ENCODE measurements at regions of chr13 and their contacts with region 1.

Region 1: DNA sequence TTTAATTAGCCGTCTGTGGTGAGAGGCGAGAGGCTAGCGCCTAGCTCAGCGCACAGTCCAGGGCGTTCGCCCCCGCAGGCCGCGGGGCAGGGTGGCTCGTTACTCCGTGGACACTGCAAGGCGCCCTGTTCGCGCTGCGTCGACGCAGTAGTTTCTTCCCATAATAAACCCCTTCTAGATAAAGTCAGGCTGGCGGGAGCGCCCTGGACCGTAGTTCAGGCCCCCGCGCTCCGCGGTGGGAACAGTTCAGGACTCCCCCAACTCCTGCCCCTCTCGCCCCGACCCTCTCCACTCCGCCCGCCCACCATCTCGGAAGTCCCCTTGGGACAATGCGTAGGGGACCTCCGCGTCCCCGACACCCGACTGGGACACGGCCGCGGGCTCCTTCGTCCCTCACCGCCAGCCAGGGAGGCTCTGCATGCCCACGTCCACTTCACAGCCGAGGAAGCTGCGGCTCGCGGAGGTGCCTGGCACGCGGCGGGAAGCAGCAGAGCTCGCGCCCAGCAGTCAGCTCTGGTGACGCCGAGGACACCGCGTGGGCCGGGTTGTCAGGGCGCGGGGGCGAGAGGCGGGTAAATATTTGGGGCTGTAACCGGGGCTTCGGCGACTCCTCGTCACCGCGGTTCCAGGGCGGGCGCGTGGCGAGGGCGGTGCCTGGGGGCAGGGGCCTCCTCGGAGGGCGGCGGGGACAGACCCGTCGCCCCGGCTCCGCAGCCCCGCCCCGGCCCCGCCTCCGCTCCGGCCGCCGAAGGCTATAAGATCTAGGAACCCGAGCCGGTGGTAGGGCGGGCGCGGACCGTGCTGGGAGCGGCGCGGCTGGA is at the start of gene RGCC:
- DNase-seq: peak; percentile 45 to 89 (median 85)
- H3K4me3 ChIP-seq: peak within 1 kb of the TSS; percentile 52 to 98 (median 86)
- H3K27ac ChIP-seq: peak within 1 kb of the TSS; percentile 16 to 96 (median 91)
- H3K27me3 ChIP-seq: peaks cover 0 to 6% (median 0%) of the 10 kb centered on the region in 45 donors
- CTCF ChIP-seq: peak in 6 of 56 donors; percentile 6 to 24 (median 12)
- total RNA-seq, gene RGCC: 33.3 to 301 (median 127) TPM

Region 2: GRCh38 chr13:41384755-41385503 is 72.0 kb before region 1 on chr13:
- intact Hi-C with region 1: loop called in 1 of 2 experiments (anchors 10 kb)
- DNase-seq: no peak
- H3K4me3 ChIP-seq: no peak overlapping the region
- H3K27ac ChIP-seq: no peak overlapping the region
- H3K27me3 ChIP-seq: no peaks in the 10 kb centered on the region
- CTCF ChIP-seq: peak in 54 of 56 donors; percentile 25 to 62 (median 46)

Region 3: DNA sequence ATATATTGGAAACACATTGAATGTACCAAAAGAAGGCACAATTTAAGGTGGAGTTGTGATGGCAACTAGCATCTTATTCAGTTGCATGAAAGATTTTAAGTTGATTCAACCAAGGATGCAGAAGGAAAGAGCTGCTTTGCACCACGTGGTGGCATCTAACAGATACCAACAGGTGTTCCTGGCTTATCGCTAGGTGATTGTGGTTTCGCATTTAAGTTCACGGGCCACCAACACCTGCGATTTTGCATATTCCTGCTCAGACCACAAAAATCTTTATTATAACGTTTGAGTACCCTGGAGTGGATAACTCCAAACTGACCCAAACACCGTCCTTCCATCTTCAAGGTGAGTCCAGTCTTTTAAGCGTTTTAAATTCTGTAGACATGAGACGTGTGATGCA is 45.7 kb after region 1 on chr13:
- intact Hi-C with region 1: no loop called
- DNase-seq: no peak
- H3K4me3 ChIP-seq: no peak overlapping the region
- H3K27ac ChIP-seq: no peak overlapping the region
- H3K27me3 ChIP-seq: no peaks in the 10 kb centered on the region
- CTCF ChIP-seq: no peak

Region 4: DNA sequence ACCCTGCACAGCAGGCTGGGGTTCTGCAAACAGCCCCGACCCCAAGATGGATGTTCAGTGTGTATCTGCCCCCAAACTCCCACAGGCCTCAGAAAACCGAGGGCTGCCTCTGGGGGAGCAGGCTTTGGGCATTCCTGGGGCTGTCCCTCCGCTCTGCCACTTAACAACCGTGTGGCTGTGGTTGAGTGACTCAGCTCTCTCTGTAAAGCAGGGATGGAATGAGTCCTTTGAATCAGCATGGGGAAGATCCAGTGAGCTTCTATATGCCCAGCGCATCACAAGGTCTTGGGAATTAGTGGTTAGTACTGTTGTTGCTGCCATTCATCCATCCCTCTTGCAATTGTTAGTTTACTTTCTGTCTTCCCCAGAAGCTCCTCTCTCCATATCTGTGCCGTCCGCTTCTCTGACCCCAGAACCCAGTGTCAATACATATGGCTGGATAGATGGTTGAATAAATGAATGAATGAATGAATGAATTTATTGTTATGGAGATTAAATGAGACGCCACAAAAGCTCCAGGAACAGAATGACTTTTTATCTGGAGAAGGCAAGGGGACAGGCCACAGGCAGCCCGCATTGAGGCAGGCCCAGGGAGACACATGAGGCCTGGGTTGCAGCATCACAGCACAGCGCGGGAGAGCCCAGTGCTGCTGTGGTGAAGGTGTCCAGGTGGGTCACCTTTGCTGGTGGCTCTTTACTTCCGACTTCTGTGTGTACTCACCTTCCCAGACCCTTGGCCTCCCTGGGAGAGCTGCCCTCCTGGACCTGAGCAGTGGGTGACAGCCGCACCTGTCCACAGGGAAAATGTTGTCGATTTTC is 89.6 kb after region 1 on chr13:
- intact Hi-C with region 1: loop called (anchors 1 to 2 kb)
- DNase-seq: peak in 1 of 10 donors; percentile 47
- H3K4me3 ChIP-seq: peak overlapping the region in 23 of 59 donors; percentile 1 to 46 (median 16)
- H3K27ac ChIP-seq: peak overlapping the region; percentile 92 to 100 (median 99)
- H3K27me3 ChIP-seq: no peaks in the 10 kb centered on the region
- CTCF ChIP-seq: no peak

Region 5: DNA sequence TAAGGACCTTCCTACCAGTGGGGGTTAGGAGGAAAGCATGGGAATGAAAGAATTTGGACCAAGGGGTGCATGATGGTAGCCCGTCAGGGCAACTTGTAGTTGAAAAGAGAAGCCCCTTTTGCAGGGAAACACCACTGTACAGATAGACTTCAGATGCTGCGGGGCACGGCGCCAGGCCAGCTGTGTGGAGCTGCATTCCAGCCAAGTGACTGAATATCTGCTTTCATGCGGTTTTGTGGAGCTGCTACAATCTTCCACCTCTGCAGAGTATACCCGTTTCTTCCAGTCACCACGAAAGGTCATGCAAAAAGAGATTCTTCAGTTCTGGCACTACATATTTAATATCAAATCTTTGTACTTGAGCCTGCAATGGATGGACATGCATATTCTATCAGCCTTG is 105.1 kb after region 1 on chr13:
- intact Hi-C with region 1: loop called (anchors 2 to 5 kb)
- DNase-seq: peak; percentile 43 to 98 (median 92)
- H3K4me3 ChIP-seq: peak overlapping the region in 3 of 59 donors; percentile 3 to 25 (median 21)
- H3K27ac ChIP-seq: peak overlapping the region; percentile 85 to 100 (median 98)
- H3K27me3 ChIP-seq: no peaks in the 10 kb centered on the region
- CTCF ChIP-seq: peak in 2 of 56 donors; percentile 5 to 8

Region 6: GRCh38 chr13:41603917-41604316 is 146.9 kb after region 1 on chr13:
- intact Hi-C with region 1: no loop called
- DNase-seq: no peak
- H3K4me3 ChIP-seq: no peak overlapping the region
- H3K27ac ChIP-seq: no peak overlapping the region
- H3K27me3 ChIP-seq: no peaks in the 10 kb centered on the region
- CTCF ChIP-seq: no peak

Region 7: GRCh38 chr13:41613984-41614661 is 157.1 kb after region 1 on chr13:
- intact Hi-C with region 1: loop called in 1 of 2 experiments (anchors 5 kb)
- DNase-seq: peak in 4 of 10 donors; percentile 15 to 47 (median 46)
- H3K4me3 ChIP-seq: no peak overlapping the region
- H3K27ac ChIP-seq: peak overlapping the region in 46 of 59 donors; percentile 1 to 76 (median 56)
- H3K27me3 ChIP-seq: no peaks in the 10 kb centered on the region
- CTCF ChIP-seq: peak in 1 of 56 donors; percentile 11

Region 8: DNA sequence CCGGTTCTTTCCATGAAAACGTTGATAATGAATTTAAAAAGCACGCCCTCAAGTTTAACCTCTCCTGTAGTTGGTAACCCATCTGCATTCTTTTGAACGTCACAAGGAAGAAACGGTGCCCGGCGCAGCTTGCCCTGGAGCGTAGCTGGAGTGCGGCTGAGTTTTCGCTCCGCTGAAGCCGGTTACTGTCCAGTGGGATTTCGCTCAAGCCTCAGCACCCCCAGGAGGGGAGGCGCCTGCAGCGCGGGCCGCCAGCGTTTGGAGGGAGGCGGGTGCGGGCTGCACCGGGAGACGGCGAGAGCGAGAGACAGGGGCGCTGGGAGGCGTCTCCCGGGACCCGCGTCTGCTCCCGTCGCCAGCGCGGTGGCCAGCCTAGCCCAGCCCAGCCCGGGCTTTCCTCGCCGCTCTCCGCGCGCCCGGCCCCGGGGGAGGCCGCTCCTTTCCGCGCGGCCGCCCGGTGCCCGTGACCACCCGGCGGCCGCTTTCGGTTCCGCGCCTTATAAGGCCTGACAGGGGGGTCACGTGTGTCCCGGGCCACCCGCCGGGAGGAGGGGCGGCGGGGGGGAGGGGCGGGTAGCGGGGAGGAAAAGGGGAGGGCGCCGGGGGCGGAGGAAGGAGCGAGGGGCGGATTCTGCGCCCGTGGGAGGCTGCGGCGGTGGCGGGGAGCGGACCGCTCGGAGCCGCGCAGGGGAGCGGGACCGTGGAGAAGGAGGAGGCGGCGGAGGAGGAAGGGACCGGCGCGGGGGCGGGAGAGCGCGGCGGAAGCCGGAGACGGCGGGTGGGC is 583.2 kb after region 1 on chr13:
- intact Hi-C with region 1: loop called in 1 of 2 experiments (anchors 10 kb)
- DNase-seq: peak; percentile 60 to 89 (median 81)
- H3K4me3 ChIP-seq: peak overlapping the region; percentile 56 to 97 (median 86)
- H3K27ac ChIP-seq: peak overlapping the region; percentile 7 to 97 (median 92)
- H3K27me3 ChIP-seq: no peaks in the 10 kb centered on the region
- CTCF ChIP-seq: peak in 13 of 56 donors; percentile 5 to 35 (median 19)